Panc1 (cell line): ENCODE measurements at regions of chrX and their contacts with region 1.

Region 1: DNA sequence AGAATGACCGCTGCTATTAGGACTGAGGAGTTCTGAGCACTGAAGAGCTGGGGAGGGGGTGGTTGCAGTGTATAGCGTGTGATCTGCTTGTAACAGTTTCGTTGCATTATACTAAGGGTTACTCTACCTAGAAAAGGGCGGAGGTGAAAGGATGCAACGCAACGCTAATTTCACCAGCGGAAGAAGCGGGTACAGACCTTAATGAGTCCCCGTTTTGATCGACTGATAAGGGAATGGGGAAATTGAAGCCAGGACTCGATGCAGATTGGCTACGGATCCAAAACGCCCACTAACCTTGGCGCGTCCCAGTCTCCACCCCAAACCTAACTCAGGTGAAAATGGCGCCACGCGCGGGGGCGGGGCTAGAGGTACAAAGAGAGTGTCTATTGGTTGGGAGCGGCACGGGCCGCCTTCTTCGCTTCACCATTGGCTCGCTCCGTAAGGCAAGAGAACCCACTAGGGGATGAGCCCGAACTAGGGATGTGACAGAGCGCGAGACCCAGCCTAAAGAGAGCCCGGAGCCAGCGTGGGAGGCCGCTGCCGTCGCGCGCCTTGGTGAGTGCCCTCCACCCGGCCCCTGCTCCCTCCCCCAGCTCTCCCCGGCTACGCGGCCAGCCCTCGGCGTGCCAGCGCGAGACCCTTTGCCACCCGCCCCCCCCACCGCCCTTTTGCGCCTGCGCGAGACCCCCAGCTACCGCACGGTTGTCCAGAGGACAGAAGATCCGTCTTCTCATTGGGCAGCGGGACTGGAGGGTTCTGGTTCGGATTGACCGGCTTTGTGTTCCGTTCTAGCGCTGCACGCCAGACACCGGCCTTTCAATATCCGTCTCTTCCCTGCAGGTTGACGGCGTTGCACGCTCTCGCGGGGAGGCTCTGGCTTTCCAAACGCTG is at the start of gene EBP:
- DNase-seq: peak; percentile 58
- ATAC-seq: peak; percentile 99
- H3K4me3 ChIP-seq: peak within 1 kb of the TSS; percentile 78 to 82
- H3K27ac ChIP-seq: peak within 1 kb of the TSS; percentile 93
- H3K4me1 ChIP-seq: no peaks in the 10 kb centered on the region; the same call in 1 of the 2 replicates
- H3K27me3 ChIP-seq: no peaks in the 10 kb centered on the region
- CTCF ChIP-seq: no peak
- total RNA-seq, gene EBP: 157 TPM

Region 2: DNA sequence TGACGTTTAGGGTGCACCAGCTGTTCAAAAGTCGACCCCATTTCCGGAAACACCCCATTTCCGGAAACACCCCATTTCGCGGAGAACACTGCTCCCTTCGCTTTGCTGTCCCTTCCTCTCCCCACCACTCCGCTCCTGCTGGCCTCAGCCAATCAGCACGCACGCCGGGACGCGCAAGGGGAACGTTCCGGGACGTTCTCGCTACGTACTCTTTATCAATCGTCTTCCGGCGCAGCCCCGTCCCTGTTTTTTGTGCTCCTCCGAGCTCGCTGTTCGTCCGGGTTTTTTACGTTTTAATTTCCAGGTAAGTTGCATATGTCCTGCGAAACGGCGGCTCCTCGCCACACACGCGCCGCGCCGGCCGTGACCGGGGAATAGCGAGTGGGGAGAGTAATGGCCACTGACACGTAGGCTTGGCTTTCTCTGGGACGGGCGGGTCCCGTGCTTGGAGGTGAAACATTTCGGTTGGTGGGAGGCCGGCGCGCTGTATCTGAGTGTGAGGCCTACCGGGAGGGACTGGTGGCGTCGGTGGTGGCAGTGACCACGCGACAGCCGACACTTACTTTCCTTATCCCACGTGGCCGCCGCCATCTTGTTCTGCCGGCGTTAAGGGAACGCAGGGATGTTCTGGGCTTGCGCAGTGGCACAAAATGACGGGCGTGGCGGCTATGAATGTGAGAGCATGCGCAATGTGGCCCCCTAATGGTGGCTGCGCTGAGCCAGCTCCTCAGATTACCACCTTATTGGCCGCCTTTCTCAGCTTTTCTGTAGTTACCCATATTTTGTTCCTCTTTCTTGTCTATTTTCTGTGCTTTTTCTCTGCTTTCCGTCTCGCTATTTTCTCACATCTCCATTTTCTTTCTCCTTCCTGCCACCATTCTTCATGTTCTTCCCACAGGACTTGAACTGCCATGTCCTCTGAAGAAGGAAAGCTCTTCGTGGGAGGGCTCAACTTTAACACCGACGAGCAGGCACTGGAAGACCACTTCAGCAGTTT is 53.0 kb after region 1 on chrX and contains the start of gene RBM3:
- CTCF ChIA-PET with region 1: no interaction called
- POLR2A ChIA-PET with region 1: interaction called, 13 read pairs
- in situ Hi-C with region 1: no loop called
- intact Hi-C with region 1: no loop called
- DNase-seq: peak; percentile 81
- ATAC-seq: peak; percentile 97
- H3K4me3 ChIP-seq: peak within 1 kb of the TSS; percentile 81 to 99
- H3K27ac ChIP-seq: peak within 1 kb of the TSS; percentile 99
- H3K4me1 ChIP-seq: peaks cover 11% of the 10 kb centered on the region
- H3K27me3 ChIP-seq: no peaks in the 10 kb centered on the region
- CTCF ChIP-seq: no peak; the same call in 1 of the 2 replicates
- total RNA-seq, gene RBM3: 528 TPM

Region 3: DNA sequence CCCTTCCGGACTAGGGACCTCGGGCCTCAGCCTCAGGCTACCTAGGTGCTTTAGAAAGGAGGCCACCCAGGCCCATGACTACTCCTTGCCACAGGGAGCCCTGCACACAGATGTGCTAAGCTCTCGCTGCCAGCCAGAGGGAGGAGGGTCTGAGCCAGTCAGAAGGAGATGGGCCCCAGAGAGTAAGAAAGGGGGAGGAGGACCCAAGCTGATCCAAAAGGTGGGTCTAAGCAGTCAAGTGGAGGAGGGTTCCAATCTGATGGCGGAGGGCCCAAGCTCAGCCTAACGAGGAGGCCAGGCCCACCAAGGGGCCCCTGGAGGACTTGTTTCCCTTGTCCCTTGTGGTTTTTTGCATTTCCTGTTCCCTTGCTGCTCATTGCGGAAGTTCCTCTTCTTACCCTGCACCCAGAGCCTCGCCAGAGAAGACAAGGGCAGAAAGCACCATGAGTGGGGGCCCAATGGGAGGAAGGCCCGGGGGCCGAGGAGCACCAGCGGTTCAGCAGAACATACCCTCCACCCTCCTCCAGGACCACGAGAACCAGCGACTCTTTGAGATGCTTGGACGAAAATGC is 161.9 kb after region 1 on chrX and contains the start of gene WAS:
- CTCF ChIA-PET with region 1: no interaction called
- POLR2A ChIA-PET with region 1: no interaction called
- in situ Hi-C with region 1: no loop called
- intact Hi-C with region 1: no loop called
- DNase-seq: no peak
- ATAC-seq: no peak
- H3K4me3 ChIP-seq: no peak within 1 kb of the TSS
- H3K27ac ChIP-seq: no peak within 1 kb of the TSS
- H3K4me1 ChIP-seq: no peaks in the 10 kb centered on the region
- H3K27me3 ChIP-seq: no peaks in the 10 kb centered on the region
- CTCF ChIP-seq: no peak
- total RNA-seq, gene WAS: 0.82 TPM